Tibial artery (tissue), 4 donors: ENCODE measurements at regions of chr9 and their contacts with region 1.

Region 1: GRCh38 chr9:37903647-37904444 is at the start of gene SLC25A51:
- DNase-seq: peak; percentile 92 to 96
- H3K4me3 ChIP-seq: peak within 1 kb of the TSS; percentile 72 to 83
- H3K27ac ChIP-seq: peak within 1 kb of the TSS; percentile 78 to 80
- H3K4me1 ChIP-seq: peaks cover 0 to 23% (median 21%) of the 10 kb centered on the region in 4 donors
- H3K27me3 ChIP-seq: no peaks in the 10 kb centered on the region
- CTCF ChIP-seq: peak; percentile 89 to 96

Region 2: DNA sequence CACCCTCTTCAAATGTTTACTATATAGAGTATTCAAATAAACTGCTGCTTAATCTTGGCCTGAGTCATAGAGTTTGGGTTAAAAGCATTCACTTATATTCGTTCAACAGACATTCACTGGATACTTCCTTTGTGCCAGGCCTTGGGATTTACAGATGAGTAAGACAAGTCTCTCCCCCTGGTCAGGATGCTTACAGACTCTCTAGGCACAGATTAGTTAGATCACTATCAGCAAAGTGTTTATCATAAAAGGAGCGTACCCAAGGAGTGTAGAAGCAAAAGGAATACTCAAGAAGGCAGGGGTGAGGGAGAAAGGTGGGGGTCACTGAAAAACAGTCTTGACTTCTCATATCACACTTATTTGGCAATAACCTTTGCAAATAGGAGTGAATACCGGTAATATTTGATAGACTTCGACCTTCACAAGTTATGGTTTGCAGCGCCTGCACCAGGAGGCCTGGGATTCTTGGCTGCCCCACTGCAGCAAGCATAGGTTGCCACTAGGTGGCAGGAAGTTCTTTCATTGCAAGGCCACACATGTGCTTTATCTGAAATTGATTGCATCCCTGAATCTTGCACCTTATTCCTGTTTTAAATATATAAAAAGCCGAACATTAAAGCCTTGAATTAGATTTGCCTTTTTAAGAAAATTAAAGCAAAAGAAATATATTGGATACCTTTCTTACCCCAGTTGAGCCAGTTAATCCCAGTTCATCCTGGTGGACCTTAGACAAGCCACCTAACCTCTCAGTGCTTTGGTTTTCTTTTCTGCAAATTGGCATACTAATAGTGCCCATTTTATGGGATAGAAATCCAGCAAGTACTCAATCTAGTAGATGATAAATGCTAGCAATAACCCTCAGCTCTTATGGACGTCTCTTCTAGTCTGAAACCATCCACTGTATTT is 156.7 kb before region 1 on chr9:
- intact Hi-C with region 1: loop called (anchors 10 kb)
- DNase-seq: no peak
- H3K4me3 ChIP-seq: no peak overlapping the region
- H3K27ac ChIP-seq: no peak overlapping the region
- H3K4me1 ChIP-seq: no peaks in the 10 kb centered on the region
- H3K27me3 ChIP-seq: no peaks in the 10 kb centered on the region
- CTCF ChIP-seq: peak; percentile 62 to 86

Region 3: GRCh38 chr9:38074441-38074961 is 170.7 kb after region 1 on chr9:
- intact Hi-C with region 1: loop called (anchors 5 kb)
- DNase-seq: peak in 1 of 2 donors; percentile 32
- H3K4me3 ChIP-seq: no peak overlapping the region
- H3K27ac ChIP-seq: peak overlapping the region in 1 of 2 donors; percentile 3
- H3K4me1 ChIP-seq: peaks cover 0 to 17% (median 5%) of the 10 kb centered on the region in 4 donors
- H3K27me3 ChIP-seq: no peaks in the 10 kb centered on the region
- CTCF ChIP-seq: no peak

Region 4: GRCh38 chr9:38423973-38424843 is 520.4 kb after region 1 on chr9 and contains the start of gene IGFBPL1:
- intact Hi-C with region 1: loop called (anchors 5 kb)
- DNase-seq: no peak
- H3K4me3 ChIP-seq: peak within 1 kb of the TSS; percentile 52 to 60
- H3K27ac ChIP-seq: peak within 1 kb of the TSS; percentile 70 to 75
- H3K4me1 ChIP-seq: peaks cover 0 to 38% (median 16%) of the 10 kb centered on the region in 4 donors
- H3K27me3 ChIP-seq: no peaks in the 10 kb centered on the region
- CTCF ChIP-seq: no peak